ENCODE measurements at regions of chr1 and their contacts with region 1.

Region 1: GRCh38 chr1:81800695-81801650 is at the start of gene ADGRL2:
- DNase-seq: peak; percentile 81 to 88 (median 87)
- ATAC-seq: peak; percentile 91 to 93
- H3K4me3 ChIP-seq: peak within 1 kb of the TSS; percentile 86
- H3K27ac ChIP-seq: peak within 1 kb of the TSS; percentile 95
- H3K4me1 ChIP-seq: no peaks in the 10 kb centered on the region
- H3K27me3 ChIP-seq: no peaks in the 10 kb centered on the region
- total RNA-seq, gene ADGRL2: 55.4 to 78.2 (median 70.8) TPM

Region 2: GRCh38 chr1:81314513-81315233 is 486.3 kb before region 1 on chr1:
- intact Hi-C with region 1: loop called in 1 of 4 experiments (anchors 5 kb)
- DNase-seq: no peak
- ATAC-seq: peak; percentile 39 to 57
- H3K4me3 ChIP-seq: no peak overlapping the region
- H3K27ac ChIP-seq: no peak overlapping the region
- H3K4me1 ChIP-seq: no peaks in the 10 kb centered on the region
- H3K27me3 ChIP-seq: no peaks in the 10 kb centered on the region

Region 3: GRCh38 chr1:81978945-81979344 is 178.0 kb after region 1 on chr1:
- intact Hi-C with region 1: loop called in 1 of 4 experiments (anchors 10 kb)
- DNase-seq: no peak
- ATAC-seq: no peak
- H3K4me3 ChIP-seq: no peak overlapping the region
- H3K27ac ChIP-seq: no peak overlapping the region
- H3K4me1 ChIP-seq: peaks cover 1% of the 10 kb centered on the region
- H3K27me3 ChIP-seq: no peaks in the 10 kb centered on the region

Measured in right cardiac atrium (tissue), 5 donors.